Gastrocnemius medialis (tissue), 4 donors: ENCODE measurements at regions of chr13 and their contacts with region 1.

Region 1: GRCh38 chr13:33228648-33229445 is 56.7 kb downstream of the STARD13 start:
- DNase-seq: no peak
- ATAC-seq: peak; percentile 67 to 74
- H3K4me3 ChIP-seq: no peak overlapping the region
- H3K27ac ChIP-seq: peak overlapping the region; percentile 35 to 63 (median 46)
- H3K4me1 ChIP-seq: peaks cover 12 to 42% of the 10 kb centered on the region in 2 donors
- H3K27me3 ChIP-seq: no peaks in the 10 kb centered on the region
- CTCF ChIP-seq: peak; percentile 84 to 98 (median 91)
- POLR2A ChIP-seq: no peak

Region 2: GRCh38 chr13:32624441-32624840 is 604.4 kb before region 1 on chr13:
- in situ Hi-C with region 1: no loop called
- intact Hi-C with region 1: no loop called
- DNase-seq: no peak
- ATAC-seq: no peak
- H3K4me3 ChIP-seq: no peak overlapping the region
- H3K27ac ChIP-seq: no peak overlapping the region
- H3K4me1 ChIP-seq: peaks cover 20 to 21% of the 10 kb centered on the region in 2 donors
- H3K27me3 ChIP-seq: no peaks in the 10 kb centered on the region
- CTCF ChIP-seq: no peak
- POLR2A ChIP-seq: no peak

Region 3: DNA sequence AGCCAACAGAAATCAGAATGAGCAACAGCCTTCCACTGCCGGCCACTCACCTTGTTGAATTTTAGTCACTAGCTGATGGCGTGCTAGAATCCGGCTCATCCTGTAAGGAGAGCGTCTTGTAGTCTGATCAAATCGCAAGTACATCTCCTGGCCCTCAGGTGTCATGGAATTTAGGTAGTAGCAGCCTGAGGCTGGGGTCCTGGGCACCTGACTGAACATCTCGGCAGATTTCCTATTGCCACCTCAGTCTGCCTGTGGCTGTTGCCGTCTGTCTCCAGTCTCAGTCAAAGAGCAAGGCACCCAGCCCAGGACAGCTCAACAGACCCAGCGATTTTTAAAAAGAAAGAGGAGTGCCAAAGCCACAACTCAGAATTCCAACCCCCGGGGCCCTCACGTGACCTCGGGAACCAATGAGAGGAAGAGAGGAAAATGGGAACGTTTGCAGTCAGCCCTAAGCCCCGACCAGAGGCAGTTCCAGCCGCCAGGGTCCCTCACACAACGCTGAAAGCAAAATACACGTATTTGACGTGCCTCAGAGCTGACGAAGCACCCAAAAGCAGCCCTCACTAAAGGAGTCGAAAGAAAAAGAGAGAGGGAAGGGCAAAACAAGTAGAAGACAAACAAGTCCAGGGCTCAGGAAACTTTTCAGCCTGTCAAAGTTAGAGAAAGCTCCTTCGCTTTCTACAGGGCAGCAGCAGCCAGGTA is 56.7 kb after region 1 on chr13 and contains the start of gene STARD13:
- in situ Hi-C with region 1: no loop called
- intact Hi-C with region 1: loop called (anchors 2 kb)
- DNase-seq: peak; percentile 92 to 93
- ATAC-seq: peak; percentile 92 to 94
- H3K4me3 ChIP-seq: peak within 1 kb of the TSS; percentile 70 to 84 (median 74)
- H3K27ac ChIP-seq: peak within 1 kb of the TSS; percentile 84 to 93 (median 90)
- H3K4me1 ChIP-seq: peaks cover 21 to 33% of the 10 kb centered on the region in 2 donors
- H3K27me3 ChIP-seq: no peaks in the 10 kb centered on the region
- CTCF ChIP-seq: peak; percentile 18 to 45 (median 37)
- POLR2A ChIP-seq: peak; percentile 79 to 91
- total RNA-seq, gene STARD13: 7.7 to 19.3 (median 12.0) TPM

Region 4: DNA sequence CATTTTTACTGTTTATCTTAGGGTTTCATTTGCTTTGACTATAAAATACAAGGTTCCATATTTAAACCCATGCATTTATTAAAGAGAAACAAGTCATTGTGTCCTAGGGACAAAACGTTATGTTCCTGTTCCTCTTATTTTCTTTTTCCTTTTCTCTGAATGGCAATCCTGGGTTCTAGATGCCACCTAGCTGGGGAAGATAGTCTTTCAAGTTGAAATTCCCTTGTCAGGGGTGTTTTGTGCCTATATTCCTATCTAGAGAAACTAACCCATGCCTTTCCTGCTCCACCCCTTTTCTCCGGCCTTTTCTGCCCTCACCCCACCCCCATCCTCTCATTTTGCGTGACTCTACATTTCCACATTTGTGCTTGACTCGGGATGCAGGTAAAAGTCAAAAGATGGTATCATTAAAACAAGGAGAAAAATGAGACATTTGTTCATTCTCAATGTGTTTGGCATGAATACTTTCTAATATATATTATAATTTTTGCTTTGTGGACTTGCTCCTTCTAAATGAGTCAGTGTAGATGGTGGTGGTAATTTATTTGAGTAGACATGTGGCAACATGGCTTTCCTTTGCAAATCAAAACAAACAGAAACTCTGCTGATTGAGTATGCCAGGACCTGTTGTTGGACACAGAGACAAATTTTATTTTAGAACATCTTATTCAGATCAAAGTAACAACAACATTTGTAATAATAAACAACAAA is 83.5 kb after region 1 on chr13:
- in situ Hi-C with region 1: no loop called
- intact Hi-C with region 1: loop called (anchors 1 kb)
- DNase-seq: no peak
- ATAC-seq: peak; percentile 68
- H3K4me3 ChIP-seq: no peak overlapping the region
- H3K27ac ChIP-seq: no peak overlapping the region
- H3K4me1 ChIP-seq: peaks cover 0 to 8% of the 10 kb centered on the region in 2 donors
- H3K27me3 ChIP-seq: no peaks in the 10 kb centered on the region
- CTCF ChIP-seq: peak; percentile 29 to 52 (median 39)
- POLR2A ChIP-seq: no peak

Region 5: DNA sequence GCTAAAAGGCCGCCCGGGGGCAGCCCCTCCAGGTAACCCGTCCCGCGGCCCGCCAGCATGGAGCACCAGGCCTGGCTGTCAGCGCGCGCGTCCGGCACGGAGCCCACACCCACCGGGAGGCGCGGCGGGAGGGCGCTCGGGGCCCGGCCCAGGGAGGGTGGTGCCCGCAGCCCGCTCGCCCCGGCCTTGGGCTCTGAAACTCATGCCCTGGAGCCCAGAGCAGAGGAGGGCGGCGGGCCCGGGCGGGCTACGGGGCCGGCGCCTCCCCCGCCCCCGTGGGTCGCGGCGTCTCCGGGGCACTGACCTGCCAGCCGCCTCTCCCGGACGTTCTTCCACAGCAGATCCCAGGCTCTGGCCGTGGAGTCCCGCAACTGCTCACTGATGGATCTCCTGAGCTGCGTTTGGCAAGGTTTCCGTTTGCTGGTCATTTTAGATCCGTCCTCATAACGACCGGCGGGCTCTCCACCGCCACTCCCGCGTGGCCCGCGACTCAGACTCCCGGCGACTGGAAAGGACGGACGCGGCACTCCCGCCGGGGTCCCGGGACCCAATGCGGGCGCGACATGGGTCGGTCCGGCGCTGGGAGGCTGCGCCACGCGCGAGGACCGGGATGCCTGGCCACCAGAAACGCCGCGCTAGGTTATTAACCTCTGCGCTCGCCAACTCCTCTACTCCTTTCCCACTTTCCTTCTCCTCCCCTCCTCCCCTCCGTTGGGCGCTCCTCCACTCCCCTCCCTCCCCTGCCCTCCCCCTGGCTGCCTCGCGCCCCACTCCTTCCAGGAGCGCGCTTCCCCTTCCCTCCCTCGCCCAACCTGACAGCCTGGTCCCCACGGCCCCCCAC is 121.4 kb after region 1 on chr13:
- in situ Hi-C with region 1: no loop called
- intact Hi-C with region 1: loop called (anchors 2 kb)
- DNase-seq: peak; percentile 34 to 47
- ATAC-seq: peak; percentile 26 to 28
- H3K4me3 ChIP-seq: peak overlapping the region; percentile 60 to 85 (median 80)
- H3K27ac ChIP-seq: peak overlapping the region; percentile 60 to 82 (median 78)
- H3K4me1 ChIP-seq: peaks cover 23 to 33% of the 10 kb centered on the region in 2 donors
- H3K27me3 ChIP-seq: no peaks in the 10 kb centered on the region
- CTCF ChIP-seq: no peak
- POLR2A ChIP-seq: peak; percentile 20 to 36

Region 6: GRCh38 chr13:33487575-33488243 is 258.9 kb after region 1 on chr13:
- in situ Hi-C with region 1: loop called in 1 of 4 experiments (anchors 10 kb)
- intact Hi-C with region 1: no loop called
- DNase-seq: peak in 1 of 2 donors; percentile 2
- ATAC-seq: peak; percentile 65 to 83
- H3K4me3 ChIP-seq: no peak overlapping the region
- H3K27ac ChIP-seq: no peak overlapping the region
- H3K4me1 ChIP-seq: peaks cover 0 to 4% of the 10 kb centered on the region in 2 donors
- H3K27me3 ChIP-seq: no peaks in the 10 kb centered on the region
- CTCF ChIP-seq: peak in 2 of 5 experiments; percentile 21 to 27
- POLR2A ChIP-seq: no peak

Region 7: DNA sequence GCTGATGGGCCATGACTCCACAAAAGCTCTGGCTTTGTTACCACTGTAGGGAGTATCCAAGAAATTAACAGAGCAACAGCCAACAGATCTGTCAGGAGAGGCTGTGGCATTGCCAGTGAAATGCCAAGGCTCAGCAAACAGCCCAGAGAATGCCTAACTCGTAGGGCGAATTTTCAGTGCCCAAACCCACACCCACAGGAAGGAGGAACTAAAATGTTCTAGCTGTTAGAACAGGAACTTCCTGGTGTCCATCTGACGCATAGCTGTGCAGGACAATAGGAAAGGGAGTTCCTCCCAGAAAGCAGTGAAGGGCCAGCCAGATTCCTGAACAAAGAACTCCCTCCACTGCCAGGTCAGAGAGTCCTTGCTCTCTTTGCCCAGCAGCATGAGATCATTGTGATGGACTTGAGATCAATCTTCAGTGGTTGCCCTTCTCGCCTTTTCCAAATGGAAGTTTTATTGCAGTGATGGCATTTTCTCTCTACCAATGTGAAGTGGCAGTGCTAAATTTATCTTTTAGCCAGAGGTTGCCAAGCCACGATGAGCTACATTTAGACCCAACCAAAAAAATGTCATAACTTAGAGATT is 280.9 kb after region 1 on chr13:
- in situ Hi-C with region 1: no loop called
- intact Hi-C with region 1: loop called (anchors 10 kb)
- DNase-seq: peak; percentile 42 to 47
- ATAC-seq: peak; percentile 83 to 90
- H3K4me3 ChIP-seq: peak overlapping the region in 2 of 4 donors; percentile 4 to 10
- H3K27ac ChIP-seq: peak overlapping the region; percentile 65 to 81 (median 70)
- H3K4me1 ChIP-seq: peaks cover 21 to 25% of the 10 kb centered on the region in 2 donors
- H3K27me3 ChIP-seq: no peaks in the 10 kb centered on the region
- CTCF ChIP-seq: no peak
- POLR2A ChIP-seq: peak in 1 of 2 donors; percentile 15

Region 8: DNA sequence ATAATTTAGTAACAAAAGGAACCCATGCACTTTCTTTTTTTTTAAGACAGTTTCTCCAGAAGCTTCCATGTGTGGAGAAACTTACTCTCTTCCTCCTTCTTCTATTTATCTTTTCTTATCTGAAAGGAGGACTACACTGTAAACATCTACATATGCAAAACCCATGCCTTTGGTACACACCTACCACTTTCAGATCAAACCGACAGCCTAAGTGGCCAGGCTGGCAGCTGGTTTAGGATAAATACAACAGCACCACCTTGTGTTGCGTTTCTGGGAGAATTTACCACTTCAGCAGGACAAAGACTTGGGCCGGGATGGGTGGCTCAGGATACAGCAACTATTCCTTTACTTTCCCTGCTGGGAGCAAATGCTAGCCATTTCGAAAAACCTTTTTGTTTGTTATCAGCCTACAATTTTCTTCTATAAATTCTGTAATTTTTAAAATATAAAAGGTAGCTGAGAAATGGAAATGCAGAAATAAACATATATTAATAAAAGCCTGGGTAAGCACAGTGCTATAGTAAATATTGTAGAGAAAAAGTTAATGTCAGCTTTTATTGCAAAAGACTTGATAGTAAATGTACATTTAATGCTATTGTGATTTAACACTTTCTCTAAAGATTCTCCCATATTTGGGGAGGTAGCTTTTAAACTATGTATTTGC is 495.1 kb after region 1 on chr13:
- in situ Hi-C with region 1: loop called in 1 of 4 experiments (anchors 25 kb)
- intact Hi-C with region 1: loop called (anchors 5 kb)
- DNase-seq: peak; percentile 62
- ATAC-seq: peak; percentile 93 to 94
- H3K4me3 ChIP-seq: no peak overlapping the region
- H3K27ac ChIP-seq: peak overlapping the region in 2 of 4 donors; percentile 22 to 44
- H3K4me1 ChIP-seq: peaks cover 13 to 23% of the 10 kb centered on the region in 2 donors
- H3K27me3 ChIP-seq: no peaks in the 10 kb centered on the region
- CTCF ChIP-seq: peak; percentile 41 to 81 (median 58)
- POLR2A ChIP-seq: no peak